Endothelial cell of umbilical vein (primary cell): ENCODE measurements at regions of chr1 and their contacts with region 1.

Region 1: DNA sequence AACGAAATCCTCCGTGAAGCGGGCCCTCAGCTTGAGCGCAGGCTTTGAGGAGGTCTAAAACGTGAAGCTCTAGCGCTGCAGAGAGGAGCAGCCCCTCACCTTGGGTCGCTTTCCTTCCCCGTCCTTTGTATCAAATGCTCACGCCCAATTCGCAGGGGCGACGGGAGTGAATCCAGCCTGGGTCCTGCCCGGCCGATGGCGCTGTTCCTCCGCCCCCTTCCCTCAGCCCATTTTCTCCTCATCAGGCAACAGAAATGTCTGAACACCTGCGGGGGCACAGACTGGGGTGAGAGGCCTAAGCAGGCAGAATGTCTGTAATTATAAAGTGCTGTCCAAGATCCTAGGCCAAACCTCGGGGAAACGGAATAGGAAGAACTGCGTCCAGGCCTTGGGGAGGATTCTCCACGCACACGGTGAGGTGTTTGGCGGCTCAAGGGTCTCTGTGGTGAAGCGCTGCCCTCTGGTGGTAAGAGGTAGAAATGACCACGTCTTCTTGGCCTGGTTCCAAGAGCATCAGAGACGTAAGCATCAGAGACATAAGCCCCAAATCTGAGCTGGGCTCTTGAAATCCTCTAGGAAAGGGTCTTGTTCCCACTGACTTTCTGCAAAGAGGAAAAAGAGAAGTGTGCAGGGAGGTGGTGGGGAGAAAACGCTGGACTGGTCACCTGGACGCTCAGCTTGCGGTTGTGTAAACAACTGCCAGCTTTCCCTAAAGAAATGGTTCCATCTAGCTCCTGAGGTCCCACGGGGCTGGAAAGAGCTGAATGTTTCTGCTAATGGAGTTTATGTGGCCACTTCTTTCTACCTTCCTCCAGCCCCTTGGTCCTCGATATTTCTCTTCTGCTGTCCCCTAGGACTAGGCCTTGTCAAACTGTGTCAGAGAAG is 92.1 kb upstream of the CD53 start:
- DNase-seq: peak; percentile 82
- H3K4me3 ChIP-seq: no peak overlapping the region
- H3K27ac ChIP-seq: no peak overlapping the region
- H3K4me1 ChIP-seq: no peaks in the 10 kb centered on the region
- H3K27me3 ChIP-seq: no peaks in the 10 kb centered on the region
- CTCF ChIP-seq: peak; percentile 69 to 86
- POLR2A ChIP-seq: no peak

Region 2: GRCh38 chr1:110524311-110525251 is 256.3 kb before region 1 on chr1:
- CTCF ChIA-PET with region 1: interaction called, 7 read pairs
- POLR2A ChIA-PET with region 1: no interaction called
- dilution Hi-C with region 1: no loop called
- intact Hi-C with region 1: loop called (anchors 2 kb)
- DNase-seq: peak; percentile 41
- H3K4me3 ChIP-seq: no peak overlapping the region
- H3K27ac ChIP-seq: no peak overlapping the region
- H3K4me1 ChIP-seq: no peaks in the 10 kb centered on the region
- H3K27me3 ChIP-seq: peaks cover 3 to 7% of the 10 kb centered on the region in 2 experiments
- CTCF ChIP-seq: peak; percentile 50 to 79
- POLR2A ChIP-seq: no peak

Region 3: DNA sequence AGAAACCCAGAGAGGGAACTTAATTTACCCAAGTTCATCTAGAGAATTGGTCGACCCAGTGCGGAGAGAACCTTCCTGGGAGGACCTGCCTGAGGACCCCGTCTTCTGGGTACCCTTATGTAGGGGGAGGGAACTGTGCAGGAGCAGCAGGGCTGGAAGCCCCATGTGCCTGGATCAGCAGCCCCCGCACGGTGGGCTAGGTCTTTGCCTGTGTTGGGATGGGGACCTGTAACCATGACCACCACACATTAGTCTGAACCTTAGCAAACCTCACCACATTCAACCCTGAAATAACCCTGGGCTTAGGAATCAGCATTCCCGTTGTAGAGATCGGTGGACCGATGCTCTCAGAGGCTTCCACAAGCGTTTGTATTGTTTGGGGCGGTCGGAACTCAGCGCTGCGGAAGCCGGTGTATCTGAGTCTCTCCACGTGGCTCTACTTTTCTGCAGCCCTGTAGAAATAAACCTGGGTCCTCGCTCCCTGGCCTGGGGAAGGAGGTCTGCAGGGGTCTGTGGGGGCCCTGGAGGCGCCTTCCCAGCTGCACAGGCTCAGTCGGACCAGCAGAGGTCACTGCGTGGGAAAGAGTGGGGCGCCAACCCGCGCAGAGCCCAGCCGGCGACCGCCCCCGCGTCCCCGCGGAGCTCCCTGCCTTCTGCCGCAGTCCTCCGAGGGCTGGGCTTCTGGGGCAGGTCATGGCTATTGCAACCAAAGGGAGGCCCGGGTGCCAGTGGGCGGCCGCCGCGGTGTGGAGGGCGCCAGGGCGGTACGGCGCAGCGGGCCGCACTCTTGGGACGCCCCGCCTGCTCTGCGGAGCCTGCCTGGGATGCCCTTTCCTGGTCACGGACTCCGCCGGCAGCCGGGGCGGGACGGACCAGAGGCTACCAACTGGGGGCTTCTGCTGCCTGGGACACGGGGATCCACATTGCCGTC is 225.7 kb before region 1 on chr1:
- CTCF ChIA-PET with region 1: interaction called, 3 read pairs
- POLR2A ChIA-PET with region 1: no interaction called
- dilution Hi-C with region 1: no loop called
- intact Hi-C with region 1: loop called (anchors 10 kb)
- DNase-seq: peak; percentile 30
- H3K4me3 ChIP-seq: no peak overlapping the region
- H3K27ac ChIP-seq: no peak overlapping the region
- H3K4me1 ChIP-seq: no peaks in the 10 kb centered on the region
- H3K27me3 ChIP-seq: peaks cover 13 to 22% of the 10 kb centered on the region in 2 experiments
- CTCF ChIP-seq: peak; percentile 51 to 80
- POLR2A ChIP-seq: no peak

Region 4: DNA sequence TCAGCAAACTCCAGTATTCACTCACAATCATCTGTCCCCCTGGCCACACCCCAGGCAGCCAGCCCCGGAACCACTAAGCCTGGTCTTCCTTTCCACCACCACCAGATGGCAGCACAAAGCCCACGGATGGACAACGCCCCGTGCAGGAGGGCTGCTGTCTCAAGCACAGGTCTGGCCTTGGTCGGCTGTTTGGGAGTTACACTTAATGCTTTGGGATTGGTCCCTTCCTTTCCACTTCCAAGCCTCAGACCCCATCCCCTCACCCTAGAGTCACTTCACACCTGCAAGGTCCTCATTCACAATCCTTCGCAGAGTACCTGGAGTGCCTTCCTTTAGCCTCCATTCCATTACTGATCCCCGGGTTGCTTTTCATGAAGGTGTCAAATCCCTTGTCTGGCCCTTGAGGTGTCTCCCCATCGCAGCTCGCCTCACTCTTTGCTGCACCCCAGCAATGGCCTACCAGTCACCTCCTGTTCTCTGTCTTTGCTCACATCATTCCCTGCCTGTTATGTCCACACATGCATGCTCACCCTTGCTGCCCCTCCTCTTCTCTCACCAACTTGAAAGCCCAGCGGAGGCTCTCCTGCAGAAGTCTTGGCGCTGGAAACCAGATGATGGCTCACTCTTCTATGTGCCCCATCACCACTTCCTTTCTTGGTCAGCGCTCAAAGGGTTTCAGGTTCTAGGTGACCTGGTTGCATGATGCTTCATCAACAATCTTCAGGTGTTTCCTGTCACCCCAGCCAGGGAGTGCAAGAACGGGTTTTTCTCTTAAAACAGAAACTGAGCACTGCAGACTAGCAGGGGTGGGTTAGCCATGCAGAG is 149.8 kb before region 1 on chr1:
- CTCF ChIA-PET with region 1: interaction called, 8 read pairs
- POLR2A ChIA-PET with region 1: no interaction called
- dilution Hi-C with region 1: no loop called
- intact Hi-C with region 1: loop called (anchors 1 kb)
- DNase-seq: peak; percentile 46
- H3K4me3 ChIP-seq: no peak overlapping the region
- H3K27ac ChIP-seq: no peak overlapping the region
- H3K4me1 ChIP-seq: no peaks in the 10 kb centered on the region
- H3K27me3 ChIP-seq: peaks cover 0 to 2% of the 10 kb centered on the region in 2 experiments
- CTCF ChIP-seq: peak; percentile 69 to 85
- POLR2A ChIP-seq: no peak

Region 5: GRCh38 chr1:110798691-110799256 is 17.9 kb after region 1 on chr1:
- CTCF ChIA-PET with region 1: interaction called, 14 read pairs
- POLR2A ChIA-PET with region 1: no interaction called
- dilution Hi-C with region 1: no loop called
- intact Hi-C with region 1: no loop called
- DNase-seq: no peak
- H3K4me3 ChIP-seq: no peak overlapping the region
- H3K27ac ChIP-seq: no peak overlapping the region
- H3K4me1 ChIP-seq: no peaks in the 10 kb centered on the region
- H3K27me3 ChIP-seq: no peaks in the 10 kb centered on the region
- CTCF ChIP-seq: no peak
- POLR2A ChIP-seq: no peak

Region 6: DNA sequence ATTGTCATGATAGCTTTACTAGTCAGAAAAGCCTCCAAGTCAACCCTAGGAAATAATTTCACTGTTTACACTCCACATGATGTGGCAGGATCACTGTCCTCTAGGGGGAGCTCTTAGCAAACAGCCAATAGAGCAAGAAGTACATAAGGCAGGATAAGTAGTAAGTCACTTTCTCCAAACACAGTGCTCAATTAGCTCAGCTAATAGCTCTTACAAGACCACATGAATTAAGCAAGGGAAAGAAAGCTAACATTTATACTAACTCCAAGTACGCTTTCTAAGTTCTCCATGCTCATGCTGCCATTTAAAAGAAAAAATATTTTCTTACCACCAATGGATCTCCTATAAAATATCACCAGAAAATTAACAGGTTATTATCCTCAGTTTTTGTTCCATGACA is 249.7 kb after region 1 on chr1:
- CTCF ChIA-PET with region 1: interaction called, 3 read pairs
- POLR2A ChIA-PET with region 1: no interaction called
- dilution Hi-C with region 1: no loop called
- intact Hi-C with region 1: loop called (anchors 2 kb)
- DNase-seq: peak; percentile 50
- H3K4me3 ChIP-seq: no peak overlapping the region
- H3K27ac ChIP-seq: no peak overlapping the region
- H3K4me1 ChIP-seq: no peaks in the 10 kb centered on the region
- H3K27me3 ChIP-seq: no peaks in the 10 kb centered on the region
- CTCF ChIP-seq: peak; percentile 70 to 72
- POLR2A ChIP-seq: no peak